ENCODE measurements at regions of chr15 and their contacts with region 1.

Region 1: GRCh38 chr15:32802286-32802936 is 84.6 kb downstream of the GREM1 start:
- DNase-seq: peak; percentile 80
- H3K4me3 ChIP-seq: no peak overlapping the region
- H3K27ac ChIP-seq: peak overlapping the region; percentile 61
- H3K27me3 ChIP-seq: no peaks in the 10 kb centered on the region
- CTCF ChIP-seq: no peak

Region 2: GRCh38 chr15:32651229-32651837 is 151.1 kb before region 1 on chr15:
- in situ Hi-C with region 1: loop called (anchors 25 kb)
- DNase-seq: peak; percentile 56
- H3K4me3 ChIP-seq: no peak overlapping the region
- H3K27ac ChIP-seq: no peak overlapping the region
- H3K27me3 ChIP-seq: no peaks in the 10 kb centered on the region
- CTCF ChIP-seq: peak; percentile 98

Measured in brain microvascular endothelial cell (primary cell).